ENCODE measurements at regions of chr18 and their contacts with region 1.

Region 1: GRCh38 chr18:22650247-22650646 is 232.5 kb upstream of the CTAGE1 start:
- ATAC-seq: no peak
- H3K4me3 ChIP-seq: no peak overlapping the region
- H3K27ac ChIP-seq: no peak overlapping the region
- H3K4me1 ChIP-seq: no peaks in the 10 kb centered on the region

Region 2: GRCh38 chr18:22346401-22346952 is 303.8 kb before region 1 on chr18:
- in situ Hi-C with region 1: no loop called
- ATAC-seq: no peak
- H3K4me3 ChIP-seq: no peak overlapping the region
- H3K27ac ChIP-seq: no peak overlapping the region
- H3K4me1 ChIP-seq: peaks cover 7 to 21% of the 10 kb centered on the region in 2 donors

Region 3: DNA sequence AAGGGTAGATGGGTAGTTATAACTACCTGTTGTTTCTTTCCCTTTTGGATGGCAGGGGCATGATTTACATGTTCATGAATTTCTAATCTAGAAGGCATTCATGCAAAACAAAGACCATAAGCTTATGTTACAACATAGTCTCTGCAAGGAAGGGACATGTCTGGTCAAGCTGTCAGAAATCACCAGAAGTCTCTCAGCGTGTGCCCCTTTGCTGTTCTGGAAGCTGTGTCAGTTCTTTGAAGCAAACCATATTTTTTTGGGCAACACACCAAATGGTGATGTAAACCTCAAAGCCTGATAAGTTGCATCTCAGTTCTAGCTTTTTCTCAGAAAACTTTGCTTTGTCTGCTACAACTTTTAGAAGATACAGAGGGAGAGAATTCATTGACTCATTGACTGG is 59.0 kb before region 1 on chr18:
- in situ Hi-C with region 1: loop called in 1 of 9 experiments (anchors 10 kb)
- ATAC-seq: peak in 2 of 8 experiments; percentile 75 to 79
- H3K4me3 ChIP-seq: no peak overlapping the region
- H3K27ac ChIP-seq: no peak overlapping the region
- H3K4me1 ChIP-seq: no peaks in the 10 kb centered on the region

Region 4: GRCh38 chr18:23380001-23380550 is 729.8 kb after region 1 on chr18:
- in situ Hi-C with region 1: no loop called
- ATAC-seq: no peak
- H3K4me3 ChIP-seq: no peak overlapping the region
- H3K27ac ChIP-seq: no peak overlapping the region
- H3K4me1 ChIP-seq: no peaks in the 10 kb centered on the region